RWPE1 (cell line): ENCODE measurements at regions of chr16 and their contacts with region 1.

Region 1: DNA sequence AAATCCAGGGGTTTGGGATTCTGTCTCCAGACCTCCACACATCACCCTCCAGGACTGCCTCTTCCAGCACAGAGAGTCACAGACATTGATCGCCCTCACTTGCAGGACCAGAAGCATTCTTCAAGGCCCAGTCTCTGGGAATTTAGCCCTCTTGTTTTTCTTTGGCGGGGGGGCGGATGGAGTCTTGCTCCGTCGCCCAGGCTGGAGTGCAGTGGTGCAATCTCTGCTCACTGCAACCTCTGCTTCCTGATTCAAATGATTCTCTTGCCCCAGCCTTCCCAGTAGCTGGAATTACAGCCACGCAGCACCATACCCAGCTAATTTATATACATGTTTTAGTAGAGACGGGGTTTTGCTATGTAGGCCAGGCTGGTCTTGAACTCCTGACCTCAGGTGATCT is 8.5 kb upstream of the ITGAL start:
- DNase-seq: no peak
- H3K27ac ChIP-seq: no peak overlapping the region
- CTCF ChIP-seq: no peak

Region 2: GRCh38 chr16:30490210-30490609 is 26.1 kb after region 1 on chr16:
- CTCF ChIA-PET with region 1: interaction called, 3 read pairs
- POLR2A ChIA-PET with region 1: interaction called, 11 read pairs
- DNase-seq: peak; percentile 88
- H3K27ac ChIP-seq: peak overlapping the region; percentile 80
- CTCF ChIP-seq: no peak